ENCODE measurements at regions of chr7 and their contacts with region 1.

Region 1: GRCh38 chr7:67807826-67808225 is 811.2 kb downstream of the TYW1 start:
- DNase-seq: no peak
- ATAC-seq: no peak
- H3K4me3 ChIP-seq: no peak overlapping the region
- H3K27ac ChIP-seq: no peak overlapping the region
- H3K4me1 ChIP-seq: no peaks in the 10 kb centered on the region
- H3K27me3 ChIP-seq: no peaks in the 10 kb centered on the region
- CTCF ChIP-seq: no peak
- POLR2A ChIP-seq: no peak
- RAD21 ChIP-seq: no peak

Region 2: DNA sequence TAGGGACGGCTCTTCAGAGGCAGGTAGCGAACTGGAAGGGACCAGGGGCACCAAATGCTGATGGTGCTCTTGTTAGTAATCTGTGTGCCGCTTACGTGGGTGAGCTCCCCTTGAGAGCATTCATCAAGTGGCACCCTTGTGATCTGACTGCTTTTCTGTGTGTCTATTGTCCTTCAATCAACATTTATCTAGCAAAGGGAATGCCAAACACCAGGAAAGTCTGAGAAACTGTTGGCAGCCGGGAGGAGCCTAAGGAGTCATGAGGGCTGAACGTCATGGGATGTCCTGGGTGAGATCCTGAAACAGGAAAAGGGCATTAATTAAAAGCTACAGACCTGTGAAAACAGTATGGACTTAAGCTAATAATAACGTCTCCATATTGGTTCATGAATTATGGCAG is 78.1 kb before region 1 on chr7:
- CTCF ChIA-PET with region 1: no interaction called
- POLR2A ChIA-PET with region 1: no interaction called
- dilution Hi-C with region 1: no loop called
- in situ Hi-C with region 1: no loop called
- intact Hi-C with region 1: loop called (anchors 2 kb)
- DNase-seq: no peak
- ATAC-seq: no peak
- H3K4me3 ChIP-seq: no peak overlapping the region
- H3K27ac ChIP-seq: no peak overlapping the region
- H3K4me1 ChIP-seq: no peaks in the 10 kb centered on the region
- H3K27me3 ChIP-seq: no peaks in the 10 kb centered on the region
- CTCF ChIP-seq: no peak
- POLR2A ChIP-seq: no peak
- RAD21 ChIP-seq: no peak

Measured in IMR-90 (cell line).